GM10248 (cell line): ENCODE measurements at regions of chr15 and their contacts with region 1.

Region 1: DNA sequence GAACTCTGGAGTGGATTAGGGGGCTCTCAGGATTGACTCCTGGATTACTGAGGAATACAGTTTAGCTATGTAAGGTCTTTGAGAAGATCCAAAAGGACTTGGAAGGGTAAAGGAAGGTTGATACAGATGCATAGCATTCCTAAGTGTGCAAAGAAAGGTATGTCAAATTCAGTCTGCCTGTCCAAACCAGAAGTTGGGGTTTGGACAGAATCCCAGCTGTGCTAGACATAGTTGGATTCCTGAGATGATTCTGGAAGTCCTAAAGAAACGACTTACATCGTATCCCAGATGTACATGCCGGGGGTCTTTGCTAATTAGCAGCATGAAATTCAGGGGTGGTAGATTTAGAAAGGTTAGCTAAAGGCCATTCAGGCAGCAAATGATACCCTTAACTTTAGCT is 97.7 kb upstream of the TSPAN3 start:
- DNase-seq: no peak
- CTCF ChIP-seq: no peak

Region 2: DNA sequence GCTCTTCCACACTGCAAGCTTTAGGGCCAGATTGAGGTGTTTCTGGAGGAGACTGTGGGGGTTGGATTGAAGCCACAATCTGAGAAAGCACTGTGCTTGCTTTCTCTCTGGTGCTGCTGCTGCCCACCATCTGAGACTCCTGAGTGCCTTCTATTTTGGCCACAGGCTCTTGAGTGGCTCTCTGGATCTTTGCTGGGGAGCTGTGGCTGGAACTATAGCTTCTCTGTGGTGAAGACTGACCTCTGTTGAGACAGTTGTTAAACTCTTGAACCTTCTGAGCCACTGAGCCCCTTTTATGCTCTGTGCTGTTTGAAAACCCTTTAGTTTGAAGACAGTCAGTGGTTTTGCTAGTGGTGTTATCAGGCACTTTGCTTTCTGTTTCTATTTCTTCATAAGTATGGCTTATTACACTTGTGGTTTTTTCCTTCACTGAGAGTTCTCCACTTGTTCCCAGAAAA is 11.0 kb after region 1 on chr15:
- CTCF ChIA-PET with region 1: interaction called, 33 read pairs
- POLR2A ChIA-PET with region 1: no interaction called
- DNase-seq: peak; percentile 47
- CTCF ChIP-seq: peak; percentile 30